Activated CD4-positive, alpha-beta memory T cell treated with anti-CD3 and anti-CD28 coated beads, Interleukin-2, amount 10 ng/mL, durations not matched to agents 7 days and 5 days (primary cell): ENCODE measurements at regions of chr1 and their contacts with region 1.

Region 1: GRCh38 chr1:169711469-169712281 is at the start of gene SELL:
- DNase-seq: peak; percentile 83
- H3K4me3 Mint-ChIP-seq: peak within 1 kb of the TSS; percentile 82
- H3K27ac Mint-ChIP-seq: peak within 1 kb of the TSS; percentile 80
- H3K4me1 Mint-ChIP-seq: peaks cover 28% of the 10 kb centered on the region
- H3K27me3 Mint-ChIP-seq: peaks cover 27% of the 10 kb centered on the region
- total RNA-seq, gene SELL: 297 to 316 TPM

Region 2: DNA sequence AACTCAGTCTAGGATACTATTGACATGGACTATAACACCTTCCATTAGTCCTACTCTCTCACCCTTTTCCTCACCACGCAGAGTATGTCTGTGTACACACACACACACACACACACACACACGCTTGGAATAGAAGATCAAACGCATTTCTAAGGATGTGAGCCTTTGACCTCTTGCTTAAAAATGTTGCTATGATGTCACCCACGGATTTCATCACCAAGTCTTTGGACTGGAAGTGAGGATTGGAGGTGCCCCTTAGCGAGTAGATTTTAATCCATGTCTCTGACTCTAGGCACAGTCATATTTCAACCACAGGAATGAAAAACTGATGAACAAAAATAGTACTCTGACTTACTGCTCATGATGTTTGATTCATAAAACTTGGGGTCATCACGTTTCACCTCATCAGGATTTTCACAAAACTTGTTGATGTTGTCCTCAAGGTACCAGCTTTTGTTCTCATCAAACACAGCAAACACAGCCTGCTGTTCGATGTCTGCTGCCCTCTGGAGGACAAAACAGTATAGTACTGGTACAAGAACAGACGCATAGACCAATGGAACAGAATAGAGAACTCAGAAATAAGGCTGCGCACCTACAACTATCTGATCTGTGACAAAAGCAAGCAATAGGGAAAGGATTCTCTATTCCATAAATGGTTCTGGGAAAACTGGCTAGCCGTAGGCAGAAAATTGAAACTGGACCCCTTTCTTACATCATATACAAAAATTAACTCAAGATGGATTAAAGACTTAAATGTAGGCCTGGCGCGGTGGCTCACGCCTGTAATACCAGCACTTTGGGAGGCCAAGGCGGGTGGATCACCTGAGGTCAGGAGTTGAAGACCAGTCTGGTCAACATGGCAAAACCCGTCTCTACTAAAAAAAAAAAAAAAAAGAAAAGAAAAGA is 165.3 kb before region 1 on chr1:
- CTCF ChIA-PET with region 1: interaction called, 37 read pairs
- POLR2A ChIA-PET with region 1: interaction called, 12 read pairs
- DNase-seq: peak; percentile 58
- H3K4me3 Mint-ChIP-seq: no peak overlapping the region
- H3K27ac Mint-ChIP-seq: no peak overlapping the region
- H3K4me1 Mint-ChIP-seq: peaks cover 10% of the 10 kb centered on the region
- H3K27me3 Mint-ChIP-seq: no peaks in the 10 kb centered on the region

Region 3: GRCh38 chr1:169586395-169587255 is 125.0 kb before region 1 on chr1 and contains the start of gene F5:
- CTCF ChIA-PET with region 1: interaction called, 77 read pairs
- POLR2A ChIA-PET with region 1: interaction called, 10 read pairs
- DNase-seq: peak; percentile 85
- H3K4me3 Mint-ChIP-seq: peak within 1 kb of the TSS; percentile 87
- H3K27ac Mint-ChIP-seq: peak within 1 kb of the TSS; percentile 77
- H3K4me1 Mint-ChIP-seq: peaks cover 68% of the 10 kb centered on the region
- H3K27me3 Mint-ChIP-seq: no peaks in the 10 kb centered on the region
- total RNA-seq, gene F5: 8.9 to 11.0 TPM

Region 4: GRCh38 chr1:169595764-169596711 is 115.6 kb before region 1 on chr1:
- CTCF ChIA-PET with region 1: interaction called, 134 read pairs
- POLR2A ChIA-PET with region 1: interaction called, 16 read pairs
- DNase-seq: peak; percentile 40
- H3K4me3 Mint-ChIP-seq: no peak overlapping the region
- H3K27ac Mint-ChIP-seq: no peak overlapping the region
- H3K4me1 Mint-ChIP-seq: peaks cover 33% of the 10 kb centered on the region
- H3K27me3 Mint-ChIP-seq: peaks cover 11% of the 10 kb centered on the region

Region 5: GRCh38 chr1:169601093-169601881 is 110.4 kb before region 1 on chr1:
- CTCF ChIA-PET with region 1: interaction called, 134 read pairs
- POLR2A ChIA-PET with region 1: interaction called, 16 read pairs
- DNase-seq: no peak
- H3K4me3 Mint-ChIP-seq: no peak overlapping the region
- H3K27ac Mint-ChIP-seq: no peak overlapping the region
- H3K4me1 Mint-ChIP-seq: peaks cover 51% of the 10 kb centered on the region
- H3K27me3 Mint-ChIP-seq: peaks cover 7% of the 10 kb centered on the region

Region 6: GRCh38 chr1:169694304-169695075 is 17.2 kb before region 1 on chr1:
- CTCF ChIA-PET with region 1: interaction called, 40 read pairs
- POLR2A ChIA-PET with region 1: interaction called, 115 read pairs
- DNase-seq: peak; percentile 65
- H3K4me3 Mint-ChIP-seq: peak overlapping the region; percentile 31
- H3K27ac Mint-ChIP-seq: peak overlapping the region; percentile 88
- H3K4me1 Mint-ChIP-seq: peaks cover 96% of the 10 kb centered on the region
- H3K27me3 Mint-ChIP-seq: no peaks in the 10 kb centered on the region

Region 7: DNA sequence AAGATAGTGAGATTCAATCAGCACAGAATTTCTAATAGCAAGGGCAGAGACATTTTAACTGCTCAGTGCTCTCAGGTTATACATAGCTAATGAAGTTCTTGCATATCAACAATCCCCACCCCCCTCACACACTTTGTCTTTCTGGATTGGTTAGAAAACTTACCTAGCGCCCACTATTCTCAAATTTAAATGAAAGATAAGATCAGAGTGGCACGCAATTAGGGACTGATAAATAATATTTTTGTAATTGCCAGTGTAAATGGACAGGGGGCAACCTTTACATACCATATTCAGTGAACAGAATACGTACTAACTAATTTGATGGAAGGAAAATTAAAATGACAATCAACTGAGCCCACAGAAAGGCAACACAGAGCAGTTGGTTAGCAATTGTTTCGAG is 12.0 kb before region 1 on chr1:
- CTCF ChIA-PET with region 1: interaction called, 40 read pairs
- POLR2A ChIA-PET with region 1: interaction called, 115 read pairs
- DNase-seq: no peak
- H3K4me3 Mint-ChIP-seq: no peak overlapping the region
- H3K27ac Mint-ChIP-seq: peak overlapping the region; percentile 84
- H3K4me1 Mint-ChIP-seq: peaks cover 96% of the 10 kb centered on the region
- H3K27me3 Mint-ChIP-seq: no peaks in the 10 kb centered on the region